Activated CD4-positive, alpha-beta T cell treated with anti-CD3 and anti-CD28 coated beads for 36 hours (primary cell): ENCODE measurements at regions of chr13 and their contacts with region 1.

Region 1: GRCh38 chr13:35720690-35721554 is 244.4 kb upstream of the MAB21L1 start:
- DNase-seq: peak; percentile 60
- ATAC-seq: peak; percentile 57
- H3K4me3 Mint-ChIP-seq: no peak overlapping the region
- H3K27ac Mint-ChIP-seq: no peak overlapping the region
- H3K4me1 Mint-ChIP-seq: no peaks in the 10 kb centered on the region
- H3K27me3 Mint-ChIP-seq: peaks cover 13% of the 10 kb centered on the region

Region 2: DNA sequence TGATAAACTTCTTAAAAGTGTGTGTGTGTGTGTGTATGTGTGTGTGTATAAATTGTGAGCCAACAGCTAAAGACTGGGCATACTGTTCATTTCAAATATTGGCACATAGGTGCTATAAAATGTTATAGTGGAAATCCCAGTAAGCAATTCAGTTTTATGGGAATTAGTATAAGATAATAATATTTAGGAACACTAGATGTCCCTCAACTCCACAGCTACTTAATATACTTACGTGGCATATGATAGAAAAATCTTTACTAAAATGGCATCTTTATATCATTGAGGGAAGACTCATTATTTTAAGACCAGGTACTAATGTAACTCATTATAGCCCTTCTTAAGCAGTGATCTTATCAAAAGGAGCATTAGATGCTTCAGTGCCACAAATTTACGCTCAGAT is 510.7 kb before region 1 on chr13:
- CTCF ChIA-PET with region 1: no interaction called
- POLR2A ChIA-PET with region 1: no interaction called
- intact Hi-C with region 1: loop called in 1 of 2 experiments (anchors 2 kb)
- DNase-seq: no peak
- ATAC-seq: no peak
- H3K4me3 Mint-ChIP-seq: no peak overlapping the region
- H3K27ac Mint-ChIP-seq: no peak overlapping the region
- H3K4me1 Mint-ChIP-seq: no peaks in the 10 kb centered on the region
- H3K27me3 Mint-ChIP-seq: no peaks in the 10 kb centered on the region

Region 3: GRCh38 chr13:35630551-35631275 is 90.2 kb before region 1 on chr13:
- CTCF ChIA-PET with region 1: no interaction called
- POLR2A ChIA-PET with region 1: no interaction called
- intact Hi-C with region 1: loop called in 1 of 2 experiments (anchors 2 kb)
- DNase-seq: no peak
- ATAC-seq: no peak
- H3K4me3 Mint-ChIP-seq: no peak overlapping the region
- H3K27ac Mint-ChIP-seq: no peak overlapping the region
- H3K4me1 Mint-ChIP-seq: no peaks in the 10 kb centered on the region
- H3K27me3 Mint-ChIP-seq: no peaks in the 10 kb centered on the region

Region 4: GRCh38 chr13:35744566-35745178 is 23.8 kb after region 1 on chr13:
- CTCF ChIA-PET with region 1: no interaction called
- POLR2A ChIA-PET with region 1: no interaction called
- intact Hi-C with region 1: no loop called
- DNase-seq: no peak
- ATAC-seq: no peak
- H3K4me3 Mint-ChIP-seq: no peak overlapping the region
- H3K27ac Mint-ChIP-seq: no peak overlapping the region
- H3K4me1 Mint-ChIP-seq: no peaks in the 10 kb centered on the region
- H3K27me3 Mint-ChIP-seq: peaks cover 4% of the 10 kb centered on the region

Region 5: GRCh38 chr13:37074703-37075102 is 1353.8 kb after region 1 on chr13:
- CTCF ChIA-PET with region 1: no interaction called
- POLR2A ChIA-PET with region 1: no interaction called
- intact Hi-C with region 1: no loop called
- DNase-seq: no peak
- ATAC-seq: no peak
- H3K4me3 Mint-ChIP-seq: no peak overlapping the region
- H3K27ac Mint-ChIP-seq: no peak overlapping the region
- H3K4me1 Mint-ChIP-seq: no peaks in the 10 kb centered on the region
- H3K27me3 Mint-ChIP-seq: no peaks in the 10 kb centered on the region